MCF 10A (cell line): ENCODE measurements at regions of chr14 and their contacts with region 1.

Region 1: GRCh38 chr14:31420319-31421111 is at the start of gene HEATR5A:
- DNase-seq: peak; percentile 94
- H3K4me3 Mint-ChIP-seq: peak within 1 kb of the TSS; percentile 99
- H3K27ac Mint-ChIP-seq: peak within 1 kb of the TSS; percentile 97
- H3K4me1 Mint-ChIP-seq: peaks cover 16% of the 10 kb centered on the region
- H3K27me3 Mint-ChIP-seq: no peaks in the 10 kb centered on the region
- CTCF ChIP-seq: no peak
- total RNA-seq, gene HEATR5A: 23.1 and 26.2 TPM in 2 replicates

Region 2: DNA sequence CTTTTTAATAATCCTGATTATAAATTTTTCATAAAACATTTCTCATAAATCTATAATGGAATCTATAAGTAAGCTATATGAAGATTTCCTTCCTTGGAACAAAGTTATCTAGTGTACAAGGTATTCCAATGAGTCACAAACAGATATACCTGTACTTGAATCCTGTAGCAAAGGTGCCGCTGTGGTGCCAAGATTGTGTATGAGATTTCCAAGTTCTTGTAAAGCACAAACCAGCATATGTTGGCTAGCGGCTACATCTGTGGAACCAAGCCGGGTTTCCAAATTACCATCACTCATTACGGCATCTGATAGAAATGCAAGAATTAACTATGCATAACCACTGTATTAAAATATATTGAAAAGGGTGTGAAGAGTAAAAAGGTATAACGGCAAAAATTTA is 34.2 kb before region 1 on chr14:
- CTCF ChIA-PET with region 1: interaction called, 3 read pairs
- POLR2A ChIA-PET with region 1: interaction called, 16 read pairs
- intact Hi-C with region 1: no loop called
- DNase-seq: no peak
- H3K4me3 Mint-ChIP-seq: no peak overlapping the region
- H3K27ac Mint-ChIP-seq: no peak overlapping the region
- H3K4me1 Mint-ChIP-seq: no peaks in the 10 kb centered on the region
- H3K27me3 Mint-ChIP-seq: no peaks in the 10 kb centered on the region
- CTCF ChIP-seq: no peak

Region 3: DNA sequence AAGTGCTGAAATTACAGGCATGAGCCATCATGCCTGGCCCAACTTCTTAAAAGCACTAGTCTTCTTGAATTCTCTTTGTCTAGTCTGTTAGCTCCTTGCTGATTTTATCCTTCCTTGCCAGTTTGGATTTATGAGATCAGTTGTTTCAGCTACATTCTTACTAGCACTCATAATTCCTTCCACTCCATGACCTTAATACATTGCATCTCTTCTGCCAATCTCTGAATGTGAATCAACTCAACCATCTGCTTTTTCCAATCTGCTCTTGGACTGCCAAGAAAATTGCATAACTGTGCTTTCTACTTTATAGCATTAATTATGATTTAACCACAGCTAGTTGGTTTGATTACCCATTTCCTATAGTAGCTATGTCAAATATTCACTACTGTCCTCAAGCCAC is 14.8 kb after region 1 on chr14:
- CTCF ChIA-PET with region 1: interaction called, 8 read pairs
- POLR2A ChIA-PET with region 1: interaction called, 29 read pairs
- intact Hi-C with region 1: no loop called
- DNase-seq: no peak
- H3K4me3 Mint-ChIP-seq: no peak overlapping the region
- H3K27ac Mint-ChIP-seq: peak overlapping the region; percentile 46
- H3K4me1 Mint-ChIP-seq: peaks cover 10% of the 10 kb centered on the region
- H3K27me3 Mint-ChIP-seq: no peaks in the 10 kb centered on the region
- CTCF ChIP-seq: no peak

Region 4: DNA sequence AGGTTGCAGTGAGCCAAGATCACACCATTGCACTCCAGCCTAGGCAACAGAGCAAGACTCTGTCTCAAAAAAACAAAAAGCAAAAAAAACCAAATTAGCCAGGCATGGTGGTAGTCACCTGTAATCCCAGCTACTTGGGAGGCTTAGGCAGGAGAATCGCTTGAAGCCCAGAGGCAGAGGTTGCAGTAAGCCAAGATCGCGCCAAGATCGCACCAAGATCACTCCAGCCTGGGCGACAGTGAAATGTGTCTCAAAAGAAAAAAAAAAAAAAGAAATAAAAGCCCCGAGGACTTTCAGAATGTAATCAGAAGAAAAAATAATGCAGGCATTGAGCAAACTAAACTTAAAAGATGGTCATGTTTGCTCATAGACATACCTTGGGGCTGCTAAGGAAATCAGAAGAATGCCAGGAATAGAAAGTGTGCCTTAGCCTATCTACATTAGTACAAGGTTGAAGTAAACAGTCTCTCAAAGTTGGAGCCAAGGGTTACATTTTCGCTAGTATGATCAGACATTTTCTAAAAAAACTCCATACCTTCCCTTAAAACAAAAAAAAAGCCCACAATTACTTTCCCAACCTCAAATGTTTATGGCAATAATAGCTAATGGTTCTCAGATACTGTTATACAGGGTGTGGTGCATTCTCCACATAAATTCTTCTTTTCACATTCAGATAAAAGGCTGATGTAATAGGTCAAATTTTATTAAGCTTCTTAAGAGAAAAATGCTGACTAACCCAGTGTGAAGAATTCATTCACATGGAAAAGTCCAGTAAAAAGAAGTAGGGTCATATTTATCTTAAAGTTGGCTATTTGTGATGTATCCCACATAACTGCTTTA is 21.0 kb after region 1 on chr14:
- CTCF ChIA-PET with region 1: interaction called, 3 read pairs
- POLR2A ChIA-PET with region 1: interaction called, 11 read pairs
- intact Hi-C with region 1: no loop called
- DNase-seq: no peak
- H3K4me3 Mint-ChIP-seq: no peak overlapping the region
- H3K27ac Mint-ChIP-seq: peak overlapping the region; percentile 46
- H3K4me1 Mint-ChIP-seq: peaks cover 5% of the 10 kb centered on the region
- H3K27me3 Mint-ChIP-seq: no peaks in the 10 kb centered on the region
- CTCF ChIP-seq: no peak

Region 5: DNA sequence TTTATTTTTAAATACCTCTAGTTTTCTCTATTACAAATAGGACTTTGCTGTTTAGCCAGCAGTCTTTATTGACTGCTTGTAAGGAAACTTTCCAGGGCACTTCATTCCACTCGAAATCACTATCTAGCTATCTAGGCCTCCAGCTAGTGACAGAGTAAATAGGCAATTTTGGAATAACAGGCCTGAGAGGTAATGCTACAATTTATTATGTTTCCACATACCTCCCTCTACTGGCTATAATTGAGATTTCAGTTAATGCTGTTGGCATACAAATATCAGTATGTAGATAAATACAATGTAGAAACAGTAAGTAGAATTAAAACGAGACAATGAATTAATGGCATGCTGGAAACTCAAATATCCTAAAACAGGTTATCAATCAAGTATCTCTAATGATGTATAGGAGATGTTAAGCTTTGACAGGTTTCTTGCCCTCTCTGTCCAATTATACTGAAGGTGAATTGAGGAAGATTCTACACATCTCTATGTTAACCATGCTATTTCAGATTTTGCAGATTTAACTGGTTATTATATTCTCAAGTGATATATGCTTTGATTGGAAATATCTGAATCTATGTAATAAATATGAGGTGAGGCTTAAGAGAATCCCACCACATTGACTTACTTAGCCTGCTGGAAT is 29.6 kb after region 1 on chr14:
- CTCF ChIA-PET with region 1: interaction called, 8 read pairs
- POLR2A ChIA-PET with region 1: interaction called, 29 read pairs
- intact Hi-C with region 1: no loop called
- DNase-seq: peak; percentile 46
- H3K4me3 Mint-ChIP-seq: no peak overlapping the region
- H3K27ac Mint-ChIP-seq: no peak overlapping the region
- H3K4me1 Mint-ChIP-seq: peaks cover 4% of the 10 kb centered on the region
- H3K27me3 Mint-ChIP-seq: no peaks in the 10 kb centered on the region
- CTCF ChIP-seq: peak; percentile 46

Region 6: DNA sequence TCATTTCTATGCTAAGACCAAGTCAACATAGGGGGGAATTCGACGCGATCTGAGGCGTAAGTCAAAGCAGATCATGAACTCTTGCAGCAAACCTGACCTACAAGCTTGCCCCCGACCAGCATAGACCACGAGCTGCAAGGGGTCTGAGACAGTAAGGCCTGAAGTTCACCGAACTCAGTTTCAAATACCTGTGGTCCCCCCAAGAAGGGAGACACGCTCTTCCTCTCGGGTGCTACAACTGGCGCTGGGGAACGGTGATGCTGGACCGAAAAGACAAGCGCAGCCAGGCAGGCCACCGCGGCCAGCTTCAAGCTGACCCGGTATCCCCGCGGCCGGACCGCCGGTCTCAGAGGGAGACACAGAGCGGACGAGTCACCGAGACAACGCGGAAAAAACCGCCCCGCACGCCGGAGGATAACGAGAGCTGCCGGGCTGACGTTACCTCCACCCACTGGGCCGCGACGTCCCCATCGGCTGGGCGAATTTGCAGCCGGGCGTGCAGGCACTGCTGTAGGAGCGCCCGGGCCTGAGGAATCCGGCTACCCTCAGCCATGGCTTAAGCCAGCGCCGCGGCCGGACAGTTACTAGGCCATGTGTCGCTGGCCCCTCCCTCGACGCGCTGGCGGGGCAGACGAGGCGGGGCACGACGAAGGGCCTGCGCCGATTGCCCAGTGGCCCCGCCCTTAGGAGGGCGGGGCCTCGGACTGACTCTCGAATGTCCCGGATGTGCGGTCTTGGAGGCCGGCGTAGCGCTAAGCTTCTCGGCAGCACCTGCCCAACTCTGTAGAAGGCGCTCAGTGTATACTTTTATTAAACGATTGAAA is 36.5 kb after region 1 on chr14 and contains the start of gene DTD2:
- CTCF ChIA-PET with region 1: interaction called, 8 read pairs
- POLR2A ChIA-PET with region 1: interaction called, 46 read pairs
- intact Hi-C with region 1: no loop called
- DNase-seq: peak; percentile 96
- H3K4me3 Mint-ChIP-seq: peak within 1 kb of the TSS; percentile 97
- H3K27ac Mint-ChIP-seq: peak within 1 kb of the TSS; percentile 99
- H3K4me1 Mint-ChIP-seq: peaks cover 14% of the 10 kb centered on the region
- H3K27me3 Mint-ChIP-seq: no peaks in the 10 kb centered on the region
- CTCF ChIP-seq: no peak
- total RNA-seq, gene DTD2: 24.4 TPM in 2 replicates

Region 7: DNA sequence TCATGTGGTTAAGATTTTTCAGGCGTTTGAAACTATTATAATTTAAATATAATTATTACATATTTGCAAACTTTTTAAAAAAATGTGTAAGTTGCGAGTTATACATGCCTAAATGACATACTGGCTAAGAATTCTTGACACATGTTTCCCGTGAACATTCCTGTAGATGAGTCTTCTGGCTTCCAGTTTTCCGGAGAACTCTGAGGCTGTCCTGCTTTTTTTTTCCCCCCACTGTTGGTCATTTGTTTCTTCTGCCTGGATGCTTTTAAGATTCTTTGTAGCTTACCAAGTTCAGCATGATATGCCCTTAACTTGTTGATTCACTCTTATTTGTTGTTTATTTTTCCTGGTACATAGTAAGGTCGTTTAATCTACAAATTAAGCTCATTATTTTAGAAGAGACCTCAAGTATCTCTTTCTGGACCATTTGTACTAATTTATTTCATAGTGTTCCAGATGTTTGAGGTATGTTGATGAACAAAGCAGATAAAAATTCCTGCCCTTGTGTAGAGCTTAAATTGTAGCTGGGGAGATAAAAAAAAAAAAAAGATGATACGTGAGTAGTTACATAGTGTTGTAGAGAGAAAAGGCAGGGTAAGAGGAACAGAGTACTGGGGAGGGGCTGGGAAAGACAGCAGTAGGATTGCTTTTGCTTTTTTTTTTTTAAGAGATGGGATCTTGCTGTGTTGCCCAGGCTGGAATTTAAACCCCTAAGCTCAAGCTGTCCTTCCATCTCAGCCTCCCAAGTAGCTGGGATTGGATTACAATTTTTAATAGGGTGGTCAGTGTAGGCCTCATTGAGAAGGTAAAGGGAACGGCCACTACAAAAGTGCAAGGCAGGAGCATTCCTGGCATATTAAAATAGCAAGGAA is 689.4 kb after region 1 on chr14:
- CTCF ChIA-PET with region 1: no interaction called
- POLR2A ChIA-PET with region 1: no interaction called
- intact Hi-C with region 1: loop called (anchors 10 kb)
- DNase-seq: no peak
- H3K4me3 Mint-ChIP-seq: no peak overlapping the region
- H3K27ac Mint-ChIP-seq: no peak overlapping the region
- H3K4me1 Mint-ChIP-seq: peaks cover 15% of the 10 kb centered on the region
- H3K27me3 Mint-ChIP-seq: no peaks in the 10 kb centered on the region
- CTCF ChIP-seq: no peak